ENCODE measurements at regions of chr5 and their contacts with region 1.

Region 1: DNA sequence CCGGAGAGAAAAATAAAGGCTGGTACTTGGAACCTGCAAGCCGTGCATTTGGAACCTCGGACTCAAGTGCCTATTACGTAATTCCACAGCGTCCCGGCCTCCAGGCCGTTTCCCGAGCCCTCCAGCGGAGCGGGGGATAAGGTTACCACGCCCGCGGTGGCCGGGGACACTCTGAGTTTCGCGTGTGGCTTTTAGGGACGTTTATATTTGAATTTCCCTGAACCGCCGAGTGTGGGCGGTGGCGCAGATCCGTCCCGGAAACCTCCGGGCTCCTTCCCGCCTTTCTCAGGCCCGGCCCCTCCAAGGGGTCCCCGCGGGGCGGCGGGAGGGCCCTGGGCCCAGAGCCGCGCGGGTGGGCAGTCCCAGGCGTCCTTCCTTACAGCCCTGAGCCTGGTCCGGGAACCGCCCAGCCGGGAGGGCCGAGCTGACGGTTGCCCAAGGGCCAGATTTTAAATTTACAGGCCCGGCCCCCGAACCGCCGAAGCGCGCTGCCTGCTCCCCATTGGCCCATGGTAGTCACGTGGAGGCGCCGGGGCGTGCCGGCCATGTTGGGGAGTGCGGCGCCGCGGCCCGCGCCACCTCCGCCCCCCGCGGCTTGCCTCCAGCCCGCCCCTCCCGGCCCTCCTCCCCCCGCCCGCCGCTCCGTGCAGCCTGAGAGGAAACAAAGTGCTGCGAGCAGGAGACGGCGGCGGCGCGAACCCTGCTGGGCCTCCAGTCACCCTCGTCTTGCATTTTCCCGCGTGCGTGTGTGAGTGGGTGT is at the start of gene LMNB1:
- DNase-seq: peak; percentile 98
- total RNA-seq, gene LMNB1: 4.4 to 5.7 TPM

Region 2: DNA sequence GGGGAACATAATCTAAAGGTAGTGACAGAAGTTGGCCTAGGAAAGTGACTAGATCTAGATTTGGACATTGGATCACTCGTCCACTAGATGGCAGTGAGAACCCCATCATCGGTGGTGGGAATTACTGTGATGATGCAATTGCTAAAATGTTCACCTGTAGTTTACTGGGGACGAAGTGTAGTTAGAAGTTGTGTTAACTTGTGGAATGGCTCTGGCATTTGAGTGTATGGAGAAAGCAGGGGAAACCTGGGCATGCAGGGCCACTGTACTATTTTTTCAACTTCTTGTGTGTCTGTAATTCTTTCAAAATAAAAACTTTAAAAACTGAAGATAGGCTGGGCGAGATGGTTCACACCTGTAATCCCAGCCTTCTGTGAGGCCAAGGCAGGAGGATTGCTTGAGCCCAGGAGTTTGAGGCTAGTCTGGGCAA is 100.5 kb before region 1 on chr5:
- intact Hi-C with region 1: loop called (anchors 5 to 10 kb)
- DNase-seq: no peak